Transverse colon (tissue), 4 donors: ENCODE measurements at regions of chr5 and their contacts with region 1.

Region 1: DNA sequence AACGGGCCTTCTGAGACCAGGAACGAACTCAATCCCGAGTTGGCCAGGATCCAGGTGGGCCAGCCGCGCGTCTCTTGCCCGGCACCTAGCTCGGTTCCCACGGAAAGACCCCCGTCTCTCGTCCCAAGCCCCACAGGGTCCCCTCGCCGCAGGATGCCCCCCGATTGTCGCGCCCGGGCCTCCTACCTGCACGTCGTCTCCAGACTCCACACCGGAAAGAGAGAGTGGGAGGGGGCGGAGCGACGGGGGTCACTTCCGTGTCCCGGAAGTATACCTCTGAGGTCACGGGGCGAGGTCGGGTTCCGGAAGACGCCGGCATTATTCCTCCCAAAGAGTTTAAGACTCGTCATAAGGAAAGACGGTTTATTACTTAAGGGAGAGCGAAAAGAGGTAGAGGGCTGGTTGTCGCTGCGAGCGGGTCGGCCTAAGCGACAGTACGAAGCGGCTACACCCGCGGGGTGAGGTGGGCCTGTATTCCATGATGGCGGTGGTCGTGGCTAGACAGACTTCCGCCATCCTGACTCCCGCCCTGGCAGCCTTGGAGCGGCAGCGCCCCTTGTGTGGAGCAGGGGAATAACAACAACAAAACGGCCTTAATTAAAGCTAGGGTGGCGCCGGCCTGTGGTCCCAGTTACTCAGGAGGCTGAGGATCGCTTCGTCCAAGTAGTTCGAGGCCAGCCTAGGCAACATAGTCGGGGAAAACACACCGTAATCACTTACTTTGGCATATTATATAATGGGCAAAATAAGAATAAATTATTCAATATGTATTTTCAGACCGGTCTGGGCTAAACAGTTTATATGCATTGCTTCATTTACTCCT is at the start of gene RPS14:
- DNase-seq: peak; percentile 96
- H3K4me3 ChIP-seq: peak within 1 kb of the TSS; percentile 78 to 86 (median 84)
- H3K27ac ChIP-seq: peak within 1 kb of the TSS; percentile 92 to 94 (median 93)
- H3K4me1 ChIP-seq: peaks cover 12 to 19% (median 13%) of the 10 kb centered on the region in 4 donors
- H3K27me3 ChIP-seq: no peaks in the 10 kb centered on the region
- CTCF ChIP-seq: peak; percentile 89 to 98 (median 94)
- EP300 ChIP-seq: peak; percentile 51
- POLR2A ChIP-seq: peak; percentile 87
- total RNA-seq, gene RPS14: 1,179 to 2,387 (median 1,878) TPM

Region 2: GRCh38 chr5:150106674-150107426 is 342.9 kb before region 1 on chr5:
- in situ Hi-C with region 1: no loop called
- intact Hi-C with region 1: no loop called
- DNase-seq: no peak
- H3K4me3 ChIP-seq: no peak overlapping the region
- H3K27ac ChIP-seq: peak overlapping the region; percentile 4 to 59 (median 52)
- H3K4me1 ChIP-seq: peaks cover 0 to 34% (median 10%) of the 10 kb centered on the region in 4 donors
- H3K27me3 ChIP-seq: no peaks in the 10 kb centered on the region
- CTCF ChIP-seq: no peak
- EP300 ChIP-seq: no peak
- POLR2A ChIP-seq: no peak

Region 3: GRCh38 chr5:150129813-150130492 is 319.8 kb before region 1 on chr5:
- in situ Hi-C with region 1: loop called in 2 of 4 experiments (anchors 25 kb)
- intact Hi-C with region 1: no loop called
- DNase-seq: peak; percentile 79
- H3K4me3 ChIP-seq: no peak overlapping the region
- H3K27ac ChIP-seq: peak overlapping the region in 1 of 4 donors; percentile 4
- H3K4me1 ChIP-seq: peaks cover 3 to 18% (median 16%) of the 10 kb centered on the region in 4 donors
- H3K27me3 ChIP-seq: no peaks in the 10 kb centered on the region
- CTCF ChIP-seq: peak; percentile 92 to 95 (median 94)
- EP300 ChIP-seq: no peak
- POLR2A ChIP-seq: no peak

Region 4: GRCh38 chr5:150161242-150162141 is 288.2 kb before region 1 on chr5:
- in situ Hi-C with region 1: loop called in 2 of 4 experiments (anchors 25 kb)
- intact Hi-C with region 1: no loop called
- DNase-seq: peak; percentile 95
- H3K4me3 ChIP-seq: peak overlapping the region in 1 of 4 donors; percentile 18
- H3K27ac ChIP-seq: peak overlapping the region; percentile 87 to 96 (median 91)
- H3K4me1 ChIP-seq: peaks cover 24 to 51% (median 41%) of the 10 kb centered on the region in 4 donors
- H3K27me3 ChIP-seq: no peaks in the 10 kb centered on the region
- CTCF ChIP-seq: peak; percentile 89 to 99 (median 93)
- EP300 ChIP-seq: no peak
- POLR2A ChIP-seq: no peak

Region 5: DNA sequence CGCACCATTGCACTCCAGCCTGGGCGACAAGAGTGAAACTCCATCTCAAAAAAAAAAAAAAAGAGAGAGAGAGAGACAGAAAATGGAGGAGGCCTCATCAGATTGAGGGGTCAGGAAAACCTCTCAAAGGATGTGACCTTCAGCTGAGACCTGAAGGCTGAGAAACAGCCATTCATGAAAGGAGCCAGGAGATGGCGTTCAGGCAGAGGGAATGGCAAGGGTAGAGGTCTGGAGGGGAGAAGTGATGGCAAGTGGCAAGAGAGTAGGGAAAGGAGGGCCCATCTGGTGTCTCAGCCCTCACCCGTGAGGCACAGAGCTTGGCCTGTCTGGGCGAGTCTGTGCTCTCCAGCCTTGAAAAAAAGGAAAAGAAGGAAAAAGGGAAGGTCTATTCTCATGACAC is 177.2 kb before region 1 on chr5:
- in situ Hi-C with region 1: loop called in 1 of 4 experiments (anchors 25 kb)
- intact Hi-C with region 1: no loop called
- DNase-seq: no peak
- H3K4me3 ChIP-seq: no peak overlapping the region
- H3K27ac ChIP-seq: no peak overlapping the region
- H3K4me1 ChIP-seq: no peaks in the 10 kb centered on the region
- H3K27me3 ChIP-seq: peaks cover 13% of the 10 kb centered on the region
- CTCF ChIP-seq: no peak
- EP300 ChIP-seq: no peak
- POLR2A ChIP-seq: no peak

Region 6: DNA sequence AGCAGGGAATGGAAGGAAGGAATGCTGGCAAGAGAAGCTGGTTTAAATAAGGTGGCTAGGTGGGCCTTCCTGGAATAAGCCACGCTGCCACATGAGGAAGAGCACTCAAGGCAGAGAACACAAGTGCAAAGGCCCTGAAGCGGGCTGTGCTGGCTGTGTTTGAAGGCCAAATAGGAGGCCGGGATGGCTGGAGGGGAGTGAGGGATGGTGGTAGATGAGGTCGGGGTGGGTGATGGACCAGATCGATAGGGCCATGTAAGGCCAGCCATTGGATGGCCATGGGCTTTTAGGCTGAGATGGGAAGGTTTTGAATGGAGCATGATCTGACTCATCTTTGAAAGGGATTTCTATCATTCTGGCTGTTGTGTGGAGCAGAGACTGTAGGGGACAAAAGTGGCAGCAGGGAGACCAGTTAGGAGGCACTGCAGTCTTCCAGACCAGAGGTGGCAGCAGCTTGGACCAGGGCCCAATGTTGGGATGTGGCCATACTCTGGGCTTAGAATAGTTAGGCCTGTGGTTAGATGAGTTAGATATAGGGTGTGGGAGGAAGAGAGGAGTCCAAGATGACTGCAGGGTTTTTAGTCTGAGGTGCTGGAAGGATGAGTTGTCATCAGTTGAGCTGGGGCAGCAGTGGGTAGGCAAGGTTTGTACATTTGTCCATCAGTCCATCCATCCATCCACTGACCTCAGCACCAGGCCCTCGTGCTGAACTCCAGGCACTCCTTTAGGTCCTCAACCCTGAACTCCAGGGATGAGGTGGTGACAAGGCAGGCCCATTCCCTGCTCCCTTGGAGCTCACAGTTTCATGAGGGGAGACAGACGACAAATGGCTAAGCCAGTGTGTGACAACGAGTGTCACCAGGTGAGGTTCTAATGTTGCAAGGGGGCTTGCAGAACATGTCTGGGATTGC is 88.5 kb after region 1 on chr5:
- in situ Hi-C with region 1: loop called in 2 of 4 experiments (anchors 10 kb)
- intact Hi-C with region 1: no loop called
- DNase-seq: no peak
- H3K4me3 ChIP-seq: no peak overlapping the region
- H3K27ac ChIP-seq: no peak overlapping the region
- H3K4me1 ChIP-seq: peaks cover 9 to 33% (median 18%) of the 10 kb centered on the region in 4 donors
- H3K27me3 ChIP-seq: no peaks in the 10 kb centered on the region
- CTCF ChIP-seq: no peak
- EP300 ChIP-seq: no peak
- POLR2A ChIP-seq: no peak

Region 7: DNA sequence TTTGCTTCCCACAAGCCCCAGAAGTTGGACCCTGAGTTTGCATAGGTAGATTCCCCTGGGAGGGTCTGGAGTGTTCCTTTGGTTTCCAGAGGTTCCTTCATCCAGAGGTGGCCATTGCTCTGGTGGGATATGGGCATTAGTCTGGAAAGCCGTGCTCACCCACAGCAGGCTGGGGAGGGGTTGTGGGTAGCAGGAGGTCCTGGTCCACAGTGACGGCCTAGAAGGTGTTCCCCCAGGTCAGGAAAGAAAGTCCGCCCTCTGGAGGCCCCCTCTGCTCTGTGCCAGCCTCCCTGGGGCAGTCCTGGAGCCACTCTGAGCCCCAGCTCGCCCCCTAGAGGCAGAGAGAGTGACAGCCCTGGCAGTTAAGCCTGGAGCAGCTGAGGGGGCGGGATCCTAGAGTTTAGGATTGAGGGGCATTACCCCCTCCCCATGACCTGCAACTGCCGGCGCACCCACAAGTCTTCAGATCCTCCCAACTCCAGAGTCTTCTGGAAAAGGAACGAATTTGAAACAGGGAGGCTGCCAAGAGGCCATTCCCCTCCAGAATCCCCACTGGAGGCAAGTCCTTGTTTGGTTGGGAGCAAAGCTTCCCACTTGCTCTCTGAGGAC is 95.0 kb after region 1 on chr5:
- in situ Hi-C with region 1: loop called in 2 of 4 experiments (anchors 10 kb)
- intact Hi-C with region 1: no loop called
- DNase-seq: peak; percentile 84
- H3K4me3 ChIP-seq: no peak overlapping the region
- H3K27ac ChIP-seq: peak overlapping the region in 1 of 4 donors; percentile 85
- H3K4me1 ChIP-seq: peaks cover 9 to 41% (median 19%) of the 10 kb centered on the region in 4 donors
- H3K27me3 ChIP-seq: no peaks in the 10 kb centered on the region
- CTCF ChIP-seq: peak; percentile 75 to 84 (median 81)
- EP300 ChIP-seq: no peak
- POLR2A ChIP-seq: no peak

Region 8: GRCh38 chr5:150656191-150657132 is 206.7 kb after region 1 on chr5:
- in situ Hi-C with region 1: loop called in 3 of 4 experiments (anchors 25 kb)
- intact Hi-C with region 1: loop called (anchors 10 kb)
- DNase-seq: peak; percentile 82
- H3K4me3 ChIP-seq: peak overlapping the region; percentile 35 to 70 (median 59)
- H3K27ac ChIP-seq: peak overlapping the region; percentile 62 to 75 (median 66)
- H3K4me1 ChIP-seq: peaks cover 0 to 23% (median 17%) of the 10 kb centered on the region in 4 donors
- H3K27me3 ChIP-seq: no peaks in the 10 kb centered on the region
- CTCF ChIP-seq: peak; percentile 32 to 71 (median 65)
- EP300 ChIP-seq: no peak
- POLR2A ChIP-seq: no peak